Cardiac septum (tissue), 1 donor: ENCODE measurements at regions of chr11 and their contacts with region 1.

Region 1: GRCh38 chr11:106724293-106724892 is 293.9 kb downstream of the GUCY1A2 start:
- DNase-seq: no peak

Region 2: DNA sequence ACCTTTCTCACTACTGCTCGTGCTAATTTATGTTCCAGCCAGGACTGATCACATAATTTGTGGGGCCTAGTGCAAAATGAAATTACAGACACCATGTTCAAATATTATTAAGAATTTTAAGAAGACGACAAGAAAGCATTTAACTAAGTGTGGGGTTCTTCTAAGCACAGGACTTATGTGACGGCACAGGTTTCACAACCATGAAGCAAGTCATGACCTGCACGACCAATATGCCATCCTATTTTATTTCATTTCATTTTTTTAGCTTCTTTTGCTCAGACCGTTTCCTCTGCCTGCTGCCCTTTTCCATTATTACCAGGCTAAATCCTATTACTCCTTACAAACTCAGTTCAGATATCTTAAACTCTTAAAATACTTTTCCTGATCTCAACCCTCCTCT is 184.4 kb before region 1 on chr11:
- intact Hi-C with region 1: no loop called
- DNase-seq: no peak

Region 3: DNA sequence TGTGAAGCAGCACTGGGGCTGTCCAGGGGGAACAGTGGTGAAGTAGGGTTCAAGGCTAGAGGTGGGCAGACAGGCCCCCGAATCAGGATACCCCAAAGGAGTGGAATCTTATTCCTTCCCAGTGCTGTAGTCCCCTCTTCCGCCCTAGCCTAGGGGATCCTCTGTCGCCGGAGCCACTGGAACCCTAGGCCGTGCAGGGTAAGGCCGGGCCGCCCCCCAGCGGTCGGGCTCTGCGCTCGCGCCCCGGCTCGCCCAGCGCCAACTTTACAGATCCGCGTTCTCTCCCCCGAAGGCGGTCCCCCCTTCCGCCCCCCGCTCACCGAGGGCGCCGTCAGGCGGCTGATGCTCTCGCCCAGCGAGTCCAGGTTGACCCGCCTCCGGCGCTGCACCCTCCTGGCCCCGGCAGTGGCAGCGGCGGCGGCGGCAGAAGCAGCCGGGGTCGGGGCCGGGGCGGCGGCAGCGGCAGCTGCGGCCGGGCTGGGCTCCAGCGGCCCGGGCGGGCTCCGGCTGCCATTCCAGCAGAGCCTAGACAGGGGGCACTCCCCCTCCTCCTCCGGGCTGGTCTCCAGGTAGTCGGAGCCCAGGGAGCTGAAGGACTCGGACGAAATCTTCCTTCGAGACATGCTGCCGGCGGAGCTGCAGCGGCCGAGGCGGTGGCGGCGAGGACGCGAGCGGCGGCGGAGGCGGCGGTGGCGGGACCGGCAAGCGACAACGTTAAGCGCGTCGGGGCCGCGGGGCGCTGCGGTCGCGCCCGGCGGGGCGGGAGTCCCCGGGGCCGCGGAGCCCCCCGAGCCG is 293.2 kb after region 1 on chr11:
- intact Hi-C with region 1: loop called (anchors 5 kb)
- DNase-seq: peak; percentile 71

Region 4: GRCh38 chr11:107043242-107044006 is 319.0 kb after region 1 on chr11:
- intact Hi-C with region 1: loop called (anchors 5 kb)
- DNase-seq: no peak